ENCODE measurements at regions of chr9 and their contacts with region 1.

Region 1: GRCh38 chr9:132575005-132575609 is 7.3 kb upstream of the BARHL1 start:
- DNase-seq: peak; percentile 13
- ATAC-seq: peak; percentile 95
- H3K4me3 ChIP-seq: no peak overlapping the region
- H3K27ac ChIP-seq: no peak overlapping the region
- H3K4me1 ChIP-seq: no peaks in the 10 kb centered on the region
- H3K27me3 ChIP-seq: peaks cover 7% of the 10 kb centered on the region; the same call in 1 of the 2 replicates
- CTCF ChIP-seq: peak; percentile 88

Region 2: GRCh38 chr9:132439153-132439552 is 136.0 kb before region 1 on chr9:
- CTCF ChIA-PET with region 1: no interaction called
- POLR2A ChIA-PET with region 1: interaction called, 16 read pairs
- in situ Hi-C with region 1: no loop called
- intact Hi-C with region 1: no loop called
- DNase-seq: no peak
- ATAC-seq: no peak
- H3K4me3 ChIP-seq: no peak overlapping the region
- H3K27ac ChIP-seq: no peak overlapping the region
- H3K4me1 ChIP-seq: no peaks in the 10 kb centered on the region
- H3K27me3 ChIP-seq: no peaks in the 10 kb centered on the region
- CTCF ChIP-seq: no peak

Region 3: DNA sequence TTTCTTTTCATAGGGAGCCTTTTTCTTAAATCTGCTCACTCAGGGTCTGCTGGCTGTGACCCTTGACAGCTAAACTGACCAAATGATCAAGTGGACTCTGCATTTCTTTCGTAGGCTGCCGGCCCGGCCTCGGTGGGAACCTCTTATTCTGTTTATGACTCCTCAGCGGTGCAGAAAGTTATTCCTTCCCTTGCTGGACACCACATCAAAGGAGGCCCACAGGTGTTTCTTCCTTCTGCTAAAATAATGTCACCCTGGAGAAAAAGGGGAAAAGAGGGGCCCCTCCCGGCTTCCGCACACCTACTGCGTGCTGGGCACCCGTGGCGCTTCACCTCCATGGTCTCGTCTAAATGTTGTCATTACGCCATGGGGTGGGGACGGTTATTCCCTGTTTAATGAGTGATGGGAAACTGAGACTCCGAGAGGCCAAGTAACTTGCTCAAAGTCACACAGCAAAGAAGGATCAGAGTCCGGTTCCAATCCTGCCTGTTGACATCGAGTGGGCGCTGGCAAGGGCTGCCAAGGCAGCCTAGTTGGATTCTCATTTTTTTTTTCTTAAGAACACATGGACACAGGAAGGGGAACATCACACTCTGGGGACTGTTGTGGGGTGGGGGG is 92.8 kb before region 1 on chr9:
- CTCF ChIA-PET with region 1: no interaction called
- POLR2A ChIA-PET with region 1: no interaction called
- in situ Hi-C with region 1: no loop called
- intact Hi-C with region 1: no loop called
- DNase-seq: no peak
- ATAC-seq: no peak
- H3K4me3 ChIP-seq: no peak overlapping the region
- H3K27ac ChIP-seq: no peak overlapping the region
- H3K4me1 ChIP-seq: no peaks in the 10 kb centered on the region
- H3K27me3 ChIP-seq: no peaks in the 10 kb centered on the region
- CTCF ChIP-seq: no peak

Region 4: DNA sequence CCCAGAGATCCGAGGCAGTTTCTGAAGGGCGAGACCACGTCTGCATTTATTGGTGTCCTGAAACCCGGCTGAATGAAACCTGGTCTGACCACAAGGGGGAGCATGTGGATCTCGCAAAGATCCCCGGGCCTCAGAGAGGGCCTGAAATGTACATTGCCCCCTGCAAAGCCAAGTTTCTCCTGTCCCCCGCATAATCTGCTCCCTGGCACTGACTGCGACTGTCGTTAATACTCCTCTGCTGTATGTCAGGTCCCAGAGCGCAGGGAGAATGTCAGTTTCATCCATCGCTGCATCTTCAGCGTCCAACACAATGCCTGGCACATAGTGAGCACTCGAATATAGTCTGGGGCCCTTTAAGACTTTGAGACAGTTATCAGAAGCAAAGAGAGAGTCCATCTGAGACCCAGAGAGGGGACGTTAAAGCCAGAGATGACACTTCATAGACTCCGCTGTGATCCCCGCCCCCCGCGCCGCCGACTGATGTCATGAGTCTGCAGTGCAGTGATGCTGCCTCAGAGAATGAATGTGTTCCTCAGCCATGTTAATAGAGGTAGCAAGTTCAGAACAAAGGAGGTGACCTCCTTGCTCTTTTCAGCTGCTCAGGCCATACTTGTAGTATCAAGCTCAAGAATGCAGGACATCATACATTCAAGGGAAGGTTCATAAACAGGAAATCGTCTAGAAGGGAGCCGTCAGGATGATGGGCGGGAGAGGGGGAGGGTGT is 67.2 kb before region 1 on chr9:
- CTCF ChIA-PET with region 1: interaction called, 3 read pairs
- POLR2A ChIA-PET with region 1: no interaction called
- in situ Hi-C with region 1: no loop called
- intact Hi-C with region 1: loop called (anchors 2 kb)
- DNase-seq: peak; percentile 32
- ATAC-seq: peak; percentile 88
- H3K4me3 ChIP-seq: no peak overlapping the region
- H3K27ac ChIP-seq: no peak overlapping the region
- H3K4me1 ChIP-seq: no peaks in the 10 kb centered on the region
- H3K27me3 ChIP-seq: no peaks in the 10 kb centered on the region; the same call in 1 of the 2 replicates
- CTCF ChIP-seq: peak; percentile 83